IMR-90 (cell line): ENCODE measurements at regions of chr7 and their contacts with region 1.

Region 1: DNA sequence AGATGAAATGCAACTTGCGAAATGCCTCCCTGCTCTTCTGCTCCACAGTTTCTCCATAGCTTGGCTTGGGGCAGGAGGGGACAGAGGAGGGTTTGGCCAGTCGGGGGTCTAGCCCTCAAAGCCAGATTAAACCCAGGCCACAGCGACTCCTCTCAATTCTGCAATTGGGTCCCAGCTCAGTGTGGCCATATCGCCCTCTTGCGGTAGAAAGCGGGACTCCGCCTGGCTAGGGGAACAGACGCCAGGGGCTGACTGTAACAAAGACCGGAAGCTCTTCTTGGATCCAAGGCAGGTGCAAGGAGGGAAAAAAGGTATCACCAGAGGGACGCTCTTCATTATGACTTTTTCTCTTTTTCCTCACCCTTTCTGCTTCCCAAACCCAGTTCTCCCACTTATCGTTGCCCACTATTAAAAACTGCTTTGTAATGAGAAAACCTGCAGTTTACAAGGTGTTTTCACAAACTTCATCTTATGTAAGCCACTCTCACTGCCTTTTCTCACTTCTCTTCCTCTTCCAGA is 36.6 kb upstream of the TNPO3 start:
- DNase-seq: peak; percentile 44
- ATAC-seq: peak; percentile 97
- H3K4me3 ChIP-seq: no peak overlapping the region
- H3K27ac ChIP-seq: no peak overlapping the region
- H3K4me1 ChIP-seq: no peaks in the 10 kb centered on the region; the same call in 1 of the 2 replicates
- H3K27me3 ChIP-seq: peaks cover 17% of the 10 kb centered on the region
- CTCF ChIP-seq: peak; percentile 98
- POLR2A ChIP-seq: peak; percentile 29; the same call in 1 of the 2 replicates
- RAD21 ChIP-seq: peak; percentile 96

Region 2: GRCh38 chr7:128904381-128905197 is 187.0 kb before region 1 on chr7:
- CTCF ChIA-PET with region 1: interaction called, 6 read pairs
- POLR2A ChIA-PET with region 1: no interaction called
- dilution Hi-C with region 1: no loop called
- in situ Hi-C with region 1: loop called (anchors 5 kb)
- intact Hi-C with region 1: loop called (anchors 1 kb)
- DNase-seq: peak; percentile 56
- ATAC-seq: peak; percentile 78
- H3K4me3 ChIP-seq: no peak overlapping the region
- H3K27ac ChIP-seq: no peak overlapping the region
- H3K4me1 ChIP-seq: no peaks in the 10 kb centered on the region
- H3K27me3 ChIP-seq: peaks cover 34% of the 10 kb centered on the region
- CTCF ChIP-seq: peak; percentile 72
- POLR2A ChIP-seq: no peak
- RAD21 ChIP-seq: peak; percentile 71

Region 3: DNA sequence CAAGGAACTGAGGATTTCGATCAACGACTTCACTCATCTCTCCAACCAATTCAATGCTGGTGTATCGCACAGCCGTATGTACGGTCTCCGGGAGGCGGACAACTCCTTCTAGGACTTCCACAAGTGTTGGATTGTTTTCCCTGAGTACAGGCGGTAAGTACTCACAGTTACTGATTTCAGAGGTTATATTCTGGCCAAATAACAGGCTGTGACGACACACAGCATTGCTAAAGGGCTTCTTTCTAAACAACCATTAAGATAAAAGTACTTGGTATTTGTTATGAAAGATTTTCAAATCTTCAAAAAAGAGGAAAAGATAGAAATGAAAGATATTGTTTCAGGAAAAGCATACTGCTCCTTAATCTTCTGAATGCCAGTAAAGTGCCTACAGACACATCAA is 101.6 kb before region 1 on chr7:
- CTCF ChIA-PET with region 1: no interaction called
- POLR2A ChIA-PET with region 1: no interaction called
- dilution Hi-C with region 1: no loop called
- in situ Hi-C with region 1: no loop called
- intact Hi-C with region 1: loop called (anchors 5 kb)
- DNase-seq: peak; percentile 21
- ATAC-seq: peak; percentile 57; the same call in 1 of the 2 replicates
- H3K4me3 ChIP-seq: no peak overlapping the region
- H3K27ac ChIP-seq: no peak overlapping the region
- H3K4me1 ChIP-seq: no peaks in the 10 kb centered on the region
- H3K27me3 ChIP-seq: no peaks in the 10 kb centered on the region
- CTCF ChIP-seq: no peak
- POLR2A ChIP-seq: no peak
- RAD21 ChIP-seq: no peak